Transverse colon (tissue), 4 donors: ENCODE measurements at regions of chr11 and their contacts with region 1.

Region 1: GRCh38 chr11:102451681-102452460 is 694 bp downstream of the TMEM123 start:
- DNase-seq: peak; percentile 82
- H3K4me3 ChIP-seq: peak overlapping the region; percentile 68 to 95 (median 84)
- H3K27ac ChIP-seq: peak overlapping the region; percentile 90 to 99 (median 96)
- H3K4me1 ChIP-seq: peaks cover 16 to 65% (median 38%) of the 10 kb centered on the region in 4 donors
- H3K27me3 ChIP-seq: no peaks in the 10 kb centered on the region
- CTCF ChIP-seq: no peak
- EP300 ChIP-seq: no peak
- POLR2A ChIP-seq: peak; percentile 65

Region 2: DNA sequence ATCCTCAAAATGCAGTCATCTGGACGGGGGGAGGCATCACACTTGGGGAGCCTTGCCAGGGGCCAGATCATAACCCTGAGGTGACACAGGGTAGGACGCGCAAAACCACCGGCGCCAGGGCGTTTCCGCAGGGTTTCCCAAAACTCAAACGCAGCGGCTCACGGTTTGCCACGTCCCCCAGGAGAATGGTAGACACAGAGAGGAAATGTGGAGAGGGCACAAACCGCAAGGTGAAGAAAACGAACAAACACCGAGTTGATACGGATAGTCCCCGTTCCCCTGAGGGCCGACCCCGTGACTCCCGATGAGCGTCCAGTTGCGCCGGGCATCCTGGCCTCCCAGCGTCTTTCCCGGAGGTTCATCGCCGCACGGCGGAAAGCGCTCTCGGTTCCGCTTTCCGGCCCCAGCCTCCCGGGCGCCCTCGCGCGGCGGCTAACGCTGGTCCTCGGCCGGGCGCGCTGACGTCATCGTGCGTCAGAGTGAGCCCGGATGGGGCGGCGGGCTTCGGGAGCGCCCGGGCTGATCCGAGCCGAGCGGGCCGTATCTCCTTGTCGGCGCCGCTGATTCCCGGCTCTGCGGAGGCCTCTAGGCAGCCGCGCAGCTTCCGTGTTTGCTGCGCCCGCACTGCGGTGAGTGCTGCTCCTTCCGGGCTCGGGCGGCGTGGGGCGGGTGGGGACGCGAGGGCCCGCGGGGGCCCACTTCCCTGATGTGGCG is 105.0 kb before region 1 on chr11 and contains the start of gene BIRC2:
- in situ Hi-C with region 1: no loop called
- intact Hi-C with region 1: loop called (anchors 2 kb)
- DNase-seq: peak; percentile 97
- H3K4me3 ChIP-seq: peak within 1 kb of the TSS; percentile 68 to 93 (median 74)
- H3K27ac ChIP-seq: peak within 1 kb of the TSS; percentile 98 to 100 (median 99)
- H3K4me1 ChIP-seq: peaks cover 5 to 32% (median 20%) of the 10 kb centered on the region in 4 donors
- H3K27me3 ChIP-seq: no peaks in the 10 kb centered on the region
- CTCF ChIP-seq: peak; percentile 71 to 95 (median 79)
- EP300 ChIP-seq: no peak
- POLR2A ChIP-seq: peak; percentile 89
- total RNA-seq, gene BIRC2: 66.5 to 95.9 (median 73.2) TPM

Region 3: GRCh38 chr11:102390667-102391465 is 61.0 kb before region 1 on chr11:
- in situ Hi-C with region 1: loop called in 1 of 4 experiments (anchors 10 kb)
- intact Hi-C with region 1: no loop called
- DNase-seq: peak; percentile 68
- H3K4me3 ChIP-seq: no peak overlapping the region
- H3K27ac ChIP-seq: no peak overlapping the region
- H3K4me1 ChIP-seq: peaks cover 0 to 7% (median 0%) of the 10 kb centered on the region in 4 donors
- H3K27me3 ChIP-seq: no peaks in the 10 kb centered on the region
- CTCF ChIP-seq: peak; percentile 86 to 90 (median 89)
- EP300 ChIP-seq: no peak
- POLR2A ChIP-seq: no peak